PC-9 (cell line): ENCODE measurements at regions of chr1 and their contacts with region 1.

Region 1: DNA sequence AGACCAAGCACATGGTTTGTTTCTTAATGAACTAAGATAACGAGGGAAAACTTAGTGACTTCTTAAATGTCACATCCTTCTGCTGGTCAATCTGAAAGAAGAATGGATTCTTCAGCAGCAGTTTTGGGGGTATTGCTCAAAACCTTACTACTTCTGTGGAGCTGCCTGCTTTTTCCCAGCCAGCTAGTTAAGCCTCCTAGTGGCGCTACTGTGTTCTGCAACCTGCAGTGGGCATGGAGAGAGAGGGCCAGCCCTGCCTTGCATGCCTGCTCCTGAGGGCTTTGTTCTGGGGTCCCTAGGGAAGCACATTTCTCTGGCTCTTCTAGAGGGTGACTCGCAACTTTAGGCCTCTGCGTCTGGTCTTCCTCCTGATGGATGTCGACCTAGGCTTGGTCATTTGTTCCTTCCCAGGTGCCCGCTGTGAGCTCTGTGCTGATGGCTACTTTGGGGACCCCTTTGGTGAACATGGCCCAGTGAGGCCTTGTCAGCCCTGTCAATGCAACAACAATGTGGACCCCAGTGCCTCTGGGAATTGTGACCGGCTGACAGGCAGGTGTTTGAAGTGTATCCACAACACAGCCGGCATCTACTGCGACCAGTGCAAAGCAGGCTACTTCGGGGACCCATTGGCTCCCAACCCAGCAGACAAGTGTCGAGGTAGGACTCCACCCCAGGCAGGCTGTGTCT is 42.0 kb downstream of the LAMC2 start:
- DNase-seq: peak in 1 of 2 experiments; percentile 33
- H3K4me3 ChIP-seq: no peak overlapping the region
- H3K27ac ChIP-seq: no peak overlapping the region
- H3K4me1 ChIP-seq: peaks cover 13% of the 10 kb centered on the region
- H3K27me3 ChIP-seq: no peaks in the 10 kb centered on the region
- CTCF ChIP-seq: peak; percentile 76

Region 2: DNA sequence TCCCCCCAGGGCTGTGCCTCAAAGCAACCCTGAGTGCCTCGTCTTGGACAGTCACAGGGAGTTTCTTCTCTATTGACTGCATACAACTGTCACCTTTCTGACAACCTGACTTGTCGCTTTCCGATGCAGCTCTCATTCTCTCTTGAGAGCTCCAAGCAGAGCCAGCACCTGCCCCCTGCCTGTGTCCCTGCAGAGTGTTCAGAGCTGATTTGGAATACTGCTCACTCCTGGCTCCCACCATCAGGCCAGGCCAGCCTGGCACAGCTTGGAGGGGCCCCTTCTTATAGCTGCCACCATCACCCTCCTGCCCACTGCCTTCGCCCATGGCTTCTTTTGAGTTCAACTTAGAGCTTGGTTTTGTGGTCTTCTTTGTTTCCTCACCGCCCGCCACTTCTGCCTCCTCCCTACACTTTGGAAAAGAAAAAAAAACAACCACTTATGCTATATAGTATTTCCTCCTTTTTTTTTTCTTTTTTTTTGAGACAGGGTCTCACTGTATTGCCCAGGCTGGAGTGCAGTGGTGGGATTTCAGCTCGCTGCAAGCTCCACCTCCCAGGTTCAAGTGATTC is 349.9 kb after region 1 on chr1:
- CTCF ChIA-PET with region 1: no interaction called
- POLR2A ChIA-PET with region 1: interaction called, 15 read pairs
- intact Hi-C with region 1: no loop called
- DNase-seq: no peak
- H3K4me3 ChIP-seq: no peak overlapping the region
- H3K27ac ChIP-seq: no peak overlapping the region
- H3K4me1 ChIP-seq: no peaks in the 10 kb centered on the region
- H3K27me3 ChIP-seq: no peaks in the 10 kb centered on the region
- CTCF ChIP-seq: no peak

Region 3: GRCh38 chr1:183764981-183765380 is 536.9 kb after region 1 on chr1:
- CTCF ChIA-PET with region 1: interaction called, 10 read pairs
- POLR2A ChIA-PET with region 1: no interaction called
- intact Hi-C with region 1: no loop called
- DNase-seq: no peak
- H3K4me3 ChIP-seq: no peak overlapping the region
- H3K27ac ChIP-seq: no peak overlapping the region
- H3K4me1 ChIP-seq: no peaks in the 10 kb centered on the region
- H3K27me3 ChIP-seq: no peaks in the 10 kb centered on the region
- CTCF ChIP-seq: no peak

Region 4: GRCh38 chr1:184118046-184118445 is 889.9 kb after region 1 on chr1:
- CTCF ChIA-PET with region 1: no interaction called
- POLR2A ChIA-PET with region 1: no interaction called
- intact Hi-C with region 1: no loop called
- DNase-seq: peak; percentile 2 to 60
- H3K4me3 ChIP-seq: no peak overlapping the region
- H3K27ac ChIP-seq: no peak overlapping the region
- H3K4me1 ChIP-seq: no peaks in the 10 kb centered on the region
- H3K27me3 ChIP-seq: no peaks in the 10 kb centered on the region
- CTCF ChIP-seq: no peak